MCF 10A (cell line): ENCODE measurements at regions of chr4 and their contacts with region 1.

Region 1: GRCh38 chr4:10535912-10536311 is 78.7 kb upstream of the ZNF518B start:
- DNase-seq: no peak
- H3K4me3 Mint-ChIP-seq: no peak overlapping the region
- H3K27ac Mint-ChIP-seq: no peak overlapping the region
- H3K4me1 Mint-ChIP-seq: peaks cover 2% of the 10 kb centered on the region
- H3K27me3 Mint-ChIP-seq: no peaks in the 10 kb centered on the region
- CTCF ChIP-seq: no peak

Region 2: GRCh38 chr4:10151182-10151581 is 384.7 kb before region 1 on chr4:
- CTCF ChIA-PET with region 1: interaction called, 11 read pairs
- POLR2A ChIA-PET with region 1: no interaction called
- intact Hi-C with region 1: no loop called
- DNase-seq: no peak
- H3K4me3 Mint-ChIP-seq: no peak overlapping the region
- H3K27ac Mint-ChIP-seq: no peak overlapping the region
- H3K4me1 Mint-ChIP-seq: no peaks in the 10 kb centered on the region
- H3K27me3 Mint-ChIP-seq: no peaks in the 10 kb centered on the region
- CTCF ChIP-seq: no peak

Region 3: GRCh38 chr4:10157478-10158332 is 378.2 kb before region 1 on chr4:
- CTCF ChIA-PET with region 1: interaction called, 40 read pairs
- POLR2A ChIA-PET with region 1: no interaction called
- intact Hi-C with region 1: no loop called
- DNase-seq: peak; percentile 72
- H3K4me3 Mint-ChIP-seq: no peak overlapping the region
- H3K27ac Mint-ChIP-seq: no peak overlapping the region
- H3K4me1 Mint-ChIP-seq: peaks cover 6% of the 10 kb centered on the region
- H3K27me3 Mint-ChIP-seq: no peaks in the 10 kb centered on the region
- CTCF ChIP-seq: peak; percentile 55